Left lung (tissue), 14 donors: ENCODE measurements at regions of chr4 and their contacts with region 1.

Region 1: DNA sequence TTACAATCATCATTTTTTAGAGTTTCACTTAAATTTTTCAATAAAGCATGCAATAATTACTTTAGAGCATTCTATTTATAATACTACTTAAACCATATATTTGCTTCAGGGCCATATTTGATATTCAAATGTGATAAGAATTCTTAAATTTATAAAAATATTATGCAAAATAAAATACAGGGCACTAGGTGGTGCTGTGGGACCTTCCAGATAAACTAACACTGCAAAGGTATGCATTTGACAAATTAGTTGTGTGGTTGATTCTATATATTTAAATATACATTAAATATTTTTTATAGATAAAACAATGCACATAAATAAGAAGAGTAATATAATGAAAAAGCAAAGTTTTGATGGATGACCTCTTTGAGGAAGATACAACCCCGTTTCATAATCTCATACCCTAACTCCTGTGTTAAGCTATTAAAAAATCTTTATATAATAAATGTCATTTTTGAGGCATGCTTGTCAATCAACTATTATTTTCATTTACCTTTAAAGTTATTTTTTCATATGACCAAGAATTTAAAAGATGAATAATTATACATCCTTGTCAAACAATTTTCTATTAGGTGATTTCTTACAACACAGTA is 128.4 kb downstream of the REELD1 start:
- DNase-seq: peak in 1 of 4 donors; percentile 42
- ATAC-seq: peak; percentile 63
- H3K4me3 ChIP-seq: no peak overlapping the region
- H3K27ac ChIP-seq: no peak overlapping the region
- H3K4me1 ChIP-seq: no peaks in the 10 kb centered on the region
- H3K27me3 ChIP-seq: no peaks in the 10 kb centered on the region
- CTCF ChIP-seq: peak in 1 of 2 donors; percentile 50

Region 2: DNA sequence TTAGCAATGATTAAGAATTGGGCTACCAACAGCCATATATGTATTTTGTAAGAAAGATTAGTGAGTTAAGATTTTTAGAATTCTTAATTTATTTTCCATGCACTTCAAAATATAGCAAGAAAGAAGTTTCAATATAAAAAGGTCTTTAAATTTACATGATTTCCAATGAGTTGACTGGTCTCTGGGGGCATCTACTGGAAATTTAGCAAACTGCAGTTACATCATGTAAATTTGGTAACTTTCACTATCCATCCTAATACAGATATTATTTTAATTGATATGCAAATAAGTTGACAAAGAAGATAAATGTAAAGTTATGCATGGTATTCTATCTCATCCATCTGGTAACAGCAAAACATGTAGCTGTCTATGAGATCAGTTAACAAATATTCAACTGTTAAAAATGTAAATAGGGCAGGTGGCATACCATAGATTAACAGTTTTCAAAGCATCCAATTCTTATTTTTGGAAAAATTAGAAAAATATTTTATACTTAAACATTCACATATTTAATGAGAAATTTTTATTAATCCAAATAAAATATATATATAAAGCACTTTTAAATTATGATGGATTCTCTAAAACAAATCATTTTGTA is 573.9 kb after region 1 on chr4:
- intact Hi-C with region 1: loop called in 1 of 2 experiments (anchors 5 kb)
- DNase-seq: peak in 2 of 4 donors; percentile 36 to 51
- ATAC-seq: peak; percentile 64
- H3K4me3 ChIP-seq: no peak overlapping the region
- H3K27ac ChIP-seq: no peak overlapping the region
- H3K4me1 ChIP-seq: no peaks in the 10 kb centered on the region
- H3K27me3 ChIP-seq: peaks cover 0 to 8% of the 10 kb centered on the region in 2 donors
- CTCF ChIP-seq: peak; percentile 43 to 66